ENCODE measurements at regions of chr19 and their contacts with region 1.

Region 1: DNA sequence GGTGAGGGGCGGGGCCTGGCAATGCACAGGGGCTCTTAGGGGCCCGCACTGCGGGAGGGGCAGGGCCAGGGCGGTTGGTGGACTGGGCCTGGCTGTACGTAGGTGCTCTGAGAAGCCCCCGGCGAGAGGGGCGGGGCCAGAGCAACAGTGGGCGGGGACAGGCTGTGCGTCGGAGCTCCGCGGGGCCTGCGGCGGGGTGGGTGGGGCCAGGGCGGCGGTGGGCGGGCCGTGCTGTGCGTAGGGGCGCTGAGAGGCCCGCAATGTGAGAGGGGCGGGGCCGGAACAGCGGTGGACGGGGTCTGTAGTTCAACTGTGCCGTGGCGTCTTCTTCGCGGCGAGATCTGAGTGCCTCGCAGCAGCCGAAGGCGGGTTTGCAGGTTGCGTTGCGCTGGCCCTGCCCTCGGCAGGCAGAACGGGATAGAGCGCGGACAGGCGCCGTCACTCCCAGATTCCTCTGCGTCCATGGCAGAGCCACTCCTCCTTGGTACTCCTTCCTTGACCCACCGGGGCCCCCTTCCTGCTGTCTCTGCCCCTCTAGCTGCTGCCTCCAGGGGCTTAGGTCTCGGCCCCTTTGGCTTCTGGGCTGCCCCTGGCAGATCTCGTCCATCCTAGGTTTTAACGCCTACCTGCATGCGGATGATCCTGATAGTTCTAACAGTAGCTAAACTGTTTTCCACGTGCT is 33.2 kb downstream of the CCNE1 start:
- DNase-seq: peak; percentile 73 to 89 (median 84)
- H3K4me3 ChIP-seq: peak overlapping the region; percentile 63 to 97 (median 82)
- H3K27ac ChIP-seq: peak overlapping the region in 54 of 59 donors; percentile 3 to 92 (median 73)
- H3K27me3 ChIP-seq: no peaks in the 10 kb centered on the region
- CTCF ChIP-seq: peak in 12 of 56 donors; percentile 5 to 38 (median 11)

Region 2: GRCh38 chr19:29811125-29812079 is 33.6 kb before region 1 on chr19 and contains the start of gene CCNE1:
- intact Hi-C with region 1: loop called (anchors 1 kb)
- DNase-seq: peak; percentile 77 to 93 (median 86)
- H3K4me3 ChIP-seq: peak within 1 kb of the TSS; percentile 44 to 79 (median 68)
- H3K27ac ChIP-seq: peak within 1 kb of the TSS in 49 of 59 donors; percentile 5 to 85 (median 67)
- H3K27me3 ChIP-seq: no peaks in the 10 kb centered on the region
- CTCF ChIP-seq: no peak
- total RNA-seq, gene CCNE1: 2.3 to 10.5 (median 5.5) TPM

Region 3: DNA sequence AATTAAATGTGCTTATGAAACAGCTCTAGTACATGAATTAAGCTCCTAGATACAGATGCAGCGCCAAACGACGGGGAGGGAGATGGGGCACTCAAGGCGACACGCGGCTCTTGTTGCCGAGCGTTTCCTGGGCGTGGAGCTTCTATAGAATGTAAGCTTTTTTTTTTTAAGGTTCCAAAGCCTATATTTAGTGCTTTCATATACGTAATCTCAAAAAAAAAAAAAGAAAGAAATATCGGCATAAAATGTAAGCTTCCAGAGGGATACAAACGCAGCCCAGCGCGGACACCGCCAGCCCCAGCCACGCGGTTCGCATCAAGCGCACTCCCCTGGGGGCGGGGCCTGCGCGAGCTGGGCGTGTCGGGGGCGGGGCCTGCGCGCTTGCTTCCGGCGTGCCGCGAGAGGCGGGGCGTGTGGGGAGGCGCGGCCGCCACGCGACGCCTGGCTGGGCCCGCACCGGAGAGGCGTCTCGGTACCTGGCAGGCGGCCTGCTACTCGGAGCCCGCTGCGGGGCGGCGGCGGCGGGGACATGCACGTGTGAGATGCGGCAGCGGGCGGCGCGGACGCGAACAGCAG is 96.9 kb after region 1 on chr19 and contains the start of gene URI1:
- intact Hi-C with region 1: loop called in 1 of 2 experiments (anchors 10 kb)
- DNase-seq: peak; percentile 81 to 95 (median 89)
- H3K4me3 ChIP-seq: peak within 1 kb of the TSS; percentile 61 to 97 (median 88)
- H3K27ac ChIP-seq: peak within 1 kb of the TSS in 46 of 59 donors; percentile 0 to 87 (median 58)
- H3K27me3 ChIP-seq: no peaks in the 10 kb centered on the region
- CTCF ChIP-seq: peak in 18 of 56 donors; percentile 9 to 37 (median 16)
- total RNA-seq, gene URI1: 43.6 to 90.9 (median 61.6) TPM